Caco-2 (cell line): ENCODE measurements at regions of chr10 and their contacts with region 1.

Region 1: DNA sequence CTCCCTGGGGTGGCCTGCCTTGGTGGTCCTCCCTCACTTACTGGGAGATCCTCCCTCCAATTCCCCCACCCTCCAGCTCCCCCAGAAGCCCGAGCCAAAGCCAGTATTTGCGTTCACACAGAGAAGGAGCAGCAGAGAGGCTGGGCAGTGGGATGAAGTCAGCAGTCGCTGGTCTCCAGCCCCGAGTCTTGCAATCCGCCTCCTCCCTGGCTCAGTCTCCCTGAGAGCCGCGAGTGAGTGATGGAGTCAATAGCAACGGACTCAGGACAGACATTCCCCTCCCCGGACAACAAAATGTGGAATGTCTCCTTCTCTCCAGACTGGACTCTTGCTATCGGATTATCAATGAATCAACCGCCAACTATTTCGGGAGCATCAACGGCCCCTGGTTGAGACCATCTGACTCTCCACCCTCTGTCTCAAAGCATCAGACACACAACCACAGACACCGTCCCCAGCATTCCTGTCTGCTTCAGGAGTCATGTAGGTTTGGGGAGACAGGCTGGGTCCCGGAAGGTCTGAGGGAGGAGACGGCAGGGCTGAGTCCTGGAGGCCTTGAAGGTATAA is 178.4 kb downstream of the SH3PXD2A start:
- DNase-seq: no peak
- H3K4me3 ChIP-seq: no peak overlapping the region
- H3K4me3 Mint-ChIP-seq: peak overlapping the region; percentile 31
- H3K27ac Mint-ChIP-seq: peak overlapping the region; percentile 93
- H3K4me1 ChIP-seq: peaks cover 32% of the 10 kb centered on the region
- H3K4me1 Mint-ChIP-seq: no peaks in the 10 kb centered on the region
- H3K27me3 ChIP-seq: no peaks in the 10 kb centered on the region
- H3K27me3 Mint-ChIP-seq: no peaks in the 10 kb centered on the region
- CTCF ChIP-seq: no peak

Region 2: GRCh38 chr10:103666087-103666761 is 10.7 kb before region 1 on chr10:
- CTCF ChIA-PET with region 1: no interaction called
- POLR2A ChIA-PET with region 1: no interaction called
- intact Hi-C with region 1: loop called (anchors 1 kb)
- DNase-seq: no peak
- H3K4me3 ChIP-seq: no peak overlapping the region
- H3K4me3 Mint-ChIP-seq: no peak overlapping the region
- H3K27ac Mint-ChIP-seq: no peak overlapping the region
- H3K4me1 ChIP-seq: peaks cover 11% of the 10 kb centered on the region
- H3K4me1 Mint-ChIP-seq: no peaks in the 10 kb centered on the region
- H3K27me3 ChIP-seq: no peaks in the 10 kb centered on the region
- H3K27me3 Mint-ChIP-seq: no peaks in the 10 kb centered on the region
- CTCF ChIP-seq: peak in 1 of 2 experiments; percentile 21